Posterior cingulate gyrus (tissue), 11 donors: ENCODE measurements at regions of chr4 and their contacts with region 1.

Region 1: GRCh38 chr4:76949276-76950051 is at the start of gene SEPTIN11:
- DNase-seq: peak; percentile 83 to 98 (median 90)

Region 2: GRCh38 chr4:76758290-76758882 is 191.1 kb before region 1 on chr4:
- intact Hi-C with region 1: loop called (anchors 10 kb)
- DNase-seq: no peak

Region 3: DNA sequence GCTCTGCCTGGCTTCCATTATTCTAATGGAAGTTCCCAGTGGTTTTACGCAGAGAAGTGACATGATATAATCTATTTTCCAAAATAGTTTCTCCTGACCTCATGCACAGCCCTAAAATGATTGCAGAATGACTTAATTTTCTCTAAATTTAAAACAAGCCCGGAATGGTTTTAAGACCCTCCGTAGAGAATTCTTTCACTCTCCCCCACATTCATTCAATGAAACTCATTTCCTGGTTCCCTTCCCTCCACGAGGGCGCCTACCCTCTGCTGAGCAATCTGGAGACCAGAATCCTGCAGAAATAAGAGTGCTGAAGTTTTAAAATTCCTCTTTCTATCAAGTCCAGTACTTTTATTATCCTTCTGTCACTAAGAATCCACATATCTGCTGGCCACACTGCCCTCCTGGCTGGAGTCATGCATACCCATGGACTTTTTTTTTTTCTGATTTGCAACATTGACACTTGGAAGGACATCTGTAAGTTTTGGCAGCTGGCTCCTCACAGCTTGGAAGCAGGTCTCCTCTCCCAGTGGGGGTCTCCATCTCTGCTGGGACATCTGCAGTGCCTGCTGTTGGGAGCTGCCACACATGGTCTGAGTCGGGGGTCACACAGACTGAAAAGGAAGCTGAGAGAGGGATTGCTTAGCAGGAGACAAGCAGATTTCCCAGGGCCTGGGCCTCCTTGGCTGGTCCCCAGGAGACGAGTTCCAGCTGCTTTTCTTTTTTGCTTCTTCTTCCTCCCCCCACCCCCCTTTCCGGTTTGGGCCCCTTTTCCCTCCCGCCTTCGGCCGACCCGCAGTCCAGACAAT is 137.7 kb before region 1 on chr4:
- intact Hi-C with region 1: no loop called
- DNase-seq: no peak

Region 4: GRCh38 chr4:77044461-77045150 is 95.1 kb after region 1 on chr4:
- intact Hi-C with region 1: loop called (anchors 10 kb)
- DNase-seq: no peak

Region 5: DNA sequence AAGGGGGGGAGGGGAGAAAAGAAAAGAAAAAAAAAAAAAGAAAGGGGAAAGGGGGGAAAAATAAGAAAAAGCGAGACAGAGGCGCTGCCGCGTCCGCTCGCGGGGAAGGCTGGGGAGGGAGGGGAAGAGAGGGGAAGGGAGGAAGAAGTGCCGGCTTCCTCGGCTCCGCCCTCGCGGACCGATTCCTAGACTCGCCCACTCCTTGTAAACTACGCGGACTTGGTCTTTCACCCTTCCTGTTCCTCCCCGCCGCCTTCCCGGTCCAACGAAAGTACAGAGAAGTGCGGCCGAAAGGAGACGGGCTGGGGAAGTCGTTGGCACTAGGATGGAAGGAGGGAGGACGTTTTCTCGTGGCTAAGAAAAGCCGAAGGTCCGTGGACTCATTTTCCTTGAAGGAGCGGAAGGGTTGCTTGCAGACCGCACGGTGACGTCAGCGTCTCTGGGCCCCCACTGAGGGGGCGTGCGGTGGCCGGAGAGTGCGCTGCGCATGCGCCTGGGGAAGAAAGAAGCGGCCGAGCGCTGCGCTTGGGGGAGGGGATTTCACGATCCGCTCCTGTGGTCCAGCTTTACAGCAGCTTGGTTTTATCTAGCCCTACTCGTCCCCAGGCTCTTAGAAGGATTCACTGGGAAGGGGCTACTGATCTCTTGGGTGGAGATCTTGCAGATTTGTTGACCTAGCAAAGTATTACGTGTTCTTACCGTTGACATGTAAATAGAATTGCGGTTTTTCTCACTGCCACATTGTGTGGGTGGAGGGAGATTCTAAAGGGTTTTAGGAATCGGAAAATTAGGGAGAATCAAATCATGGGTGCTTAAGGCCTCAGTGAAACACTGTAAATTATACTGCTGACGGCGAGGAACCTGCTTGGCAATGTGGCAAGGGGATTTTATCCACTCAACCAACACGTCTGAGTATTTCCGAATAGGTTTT is 126.7 kb after region 1 on chr4 and contains the start of gene CCNI:
- intact Hi-C with region 1: loop called (anchors 1 kb)
- DNase-seq: peak; percentile 88 to 99 (median 92)

Region 6: GRCh38 chr4:77156533-77156911 is 207.1 kb after region 1 on chr4:
- intact Hi-C with region 1: loop called (anchors 5 kb)
- DNase-seq: peak; percentile 92 to 99 (median 96)

Region 7: GRCh38 chr4:77613267-77613666 is 663.8 kb after region 1 on chr4:
- intact Hi-C with region 1: no loop called
- DNase-seq: no peak